Panc1 (cell line): ENCODE measurements at regions of chr6 and their contacts with region 1.

Region 1: DNA sequence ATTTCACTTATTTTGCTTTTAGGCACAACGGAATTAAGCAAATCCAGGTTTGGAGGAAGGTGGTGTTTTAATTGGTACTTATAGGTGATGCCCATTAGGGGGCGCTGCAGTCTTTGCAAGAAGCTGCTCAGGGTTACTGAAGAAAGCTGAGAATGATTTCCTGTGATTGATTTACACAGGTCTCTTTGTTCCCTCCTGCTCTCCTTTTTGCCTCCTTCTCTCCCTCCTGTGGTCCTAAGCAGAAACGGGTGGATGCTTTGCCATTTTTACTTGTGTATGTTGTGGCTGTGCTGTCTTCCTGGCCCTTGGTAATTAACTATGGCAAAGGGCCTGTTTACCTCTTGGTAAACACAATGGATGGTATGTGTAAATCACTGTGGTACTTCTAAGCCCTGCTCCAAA is 97.8 kb downstream of the ANKS1A start:
- DNase-seq: peak; percentile 12
- ATAC-seq: peak; percentile 73; the same call in 1 of the 2 replicates
- H3K4me3 ChIP-seq: no peak overlapping the region
- H3K27ac ChIP-seq: no peak overlapping the region
- H3K4me1 ChIP-seq: no peaks in the 10 kb centered on the region
- H3K27me3 ChIP-seq: no peaks in the 10 kb centered on the region
- CTCF ChIP-seq: peak; percentile 86

Region 2: DNA sequence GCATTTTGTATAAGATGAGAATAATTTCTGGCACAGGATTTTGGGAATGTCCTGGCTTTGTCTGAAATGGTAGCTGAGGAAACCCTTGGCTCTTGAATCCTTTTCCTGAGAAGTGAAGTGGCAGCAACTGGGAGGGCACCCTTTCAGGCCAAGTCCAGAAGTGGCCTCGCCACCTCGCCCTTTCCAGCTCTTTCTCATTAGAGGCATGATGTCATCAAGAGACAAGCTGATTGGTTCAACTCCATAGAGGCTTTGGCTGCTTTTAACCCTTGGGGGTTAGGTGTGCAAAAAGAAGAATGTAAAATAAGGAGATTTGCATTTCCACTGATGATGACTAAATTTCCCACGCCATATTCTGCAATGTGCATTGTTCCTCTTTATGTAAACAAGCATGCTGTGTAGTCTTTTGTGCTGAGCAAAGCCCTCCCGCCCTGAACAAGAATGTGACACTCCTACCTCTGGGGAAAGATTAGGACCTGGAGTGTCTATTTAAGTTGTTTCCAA is 37.8 kb after region 1 on chr6:
- CTCF ChIA-PET with region 1: no interaction called
- POLR2A ChIA-PET with region 1: no interaction called
- in situ Hi-C with region 1: no loop called
- intact Hi-C with region 1: no loop called
- DNase-seq: peak; percentile 8
- ATAC-seq: 0 out of 2 replicates have a peak, but pooled peaks have one; percentile 42
- H3K4me3 ChIP-seq: no peak overlapping the region
- H3K27ac ChIP-seq: no peak overlapping the region
- H3K4me1 ChIP-seq: peaks cover 2% of the 10 kb centered on the region; the same call in 1 of the 2 replicates
- H3K27me3 ChIP-seq: no peaks in the 10 kb centered on the region
- CTCF ChIP-seq: no peak

Region 3: DNA sequence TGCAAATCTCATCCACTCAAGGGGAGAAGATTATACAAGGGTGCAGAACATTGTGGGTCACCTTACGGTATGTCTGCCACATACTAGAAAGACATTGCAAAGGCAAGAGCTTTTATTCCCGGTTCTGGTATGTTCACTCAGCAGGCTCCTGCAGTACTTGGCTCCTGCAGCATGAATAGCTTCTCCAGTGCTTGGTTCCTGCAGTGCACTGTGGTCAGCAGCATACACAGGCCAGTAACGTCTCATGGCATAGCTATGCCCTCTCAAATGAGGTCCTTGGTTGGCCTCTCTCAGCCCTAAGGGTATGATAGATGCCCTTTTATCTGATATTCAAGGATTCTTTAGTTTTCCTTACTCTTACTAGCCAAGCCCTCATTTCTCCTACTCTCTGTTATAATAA is 141.7 kb after region 1 on chr6:
- CTCF ChIA-PET with region 1: no interaction called
- POLR2A ChIA-PET with region 1: no interaction called
- in situ Hi-C with region 1: no loop called
- intact Hi-C with region 1: loop called (anchors 5 kb)
- DNase-seq: no peak
- ATAC-seq: no peak
- H3K4me3 ChIP-seq: no peak overlapping the region
- H3K27ac ChIP-seq: no peak overlapping the region
- H3K4me1 ChIP-seq: no peaks in the 10 kb centered on the region
- H3K27me3 ChIP-seq: no peaks in the 10 kb centered on the region; the same call in 1 of the 2 replicates
- CTCF ChIP-seq: no peak

Region 4: GRCh38 chr6:35139908-35140655 is 153.2 kb after region 1 on chr6:
- CTCF ChIA-PET with region 1: interaction called, 6 read pairs
- POLR2A ChIA-PET with region 1: no interaction called
- in situ Hi-C with region 1: no loop called
- intact Hi-C with region 1: loop called (anchors 5 kb)
- DNase-seq: no peak
- ATAC-seq: peak; percentile 70; the same call in 1 of the 2 replicates
- H3K4me3 ChIP-seq: no peak overlapping the region
- H3K27ac ChIP-seq: no peak overlapping the region
- H3K4me1 ChIP-seq: no peaks in the 10 kb centered on the region
- H3K27me3 ChIP-seq: no peaks in the 10 kb centered on the region
- CTCF ChIP-seq: peak; percentile 88